HepG2 (cell line): ENCODE measurements at regions of chr6 and their contacts with region 1.

Region 1: GRCh38 chr6:13026557-13026956 is 301.8 kb downstream of the TBC1D7 start:
- DNase-seq: no peak
- ATAC-seq: no peak
- H3K4me3 ChIP-seq: no peak overlapping the region
- H3K27ac ChIP-seq: no peak overlapping the region
- H3K4me1 ChIP-seq: no peaks in the 10 kb centered on the region
- H3K27me3 ChIP-seq: peaks cover 0 to 9% of the 10 kb centered on the region in 2 experiments; a peak in 3 of 5 replicates
- CTCF ChIP-seq: no peak
- EP300 ChIP-seq: no peak
- POLR2A ChIP-seq: no peak
- RAD21 ChIP-seq: no peak

Region 2: DNA sequence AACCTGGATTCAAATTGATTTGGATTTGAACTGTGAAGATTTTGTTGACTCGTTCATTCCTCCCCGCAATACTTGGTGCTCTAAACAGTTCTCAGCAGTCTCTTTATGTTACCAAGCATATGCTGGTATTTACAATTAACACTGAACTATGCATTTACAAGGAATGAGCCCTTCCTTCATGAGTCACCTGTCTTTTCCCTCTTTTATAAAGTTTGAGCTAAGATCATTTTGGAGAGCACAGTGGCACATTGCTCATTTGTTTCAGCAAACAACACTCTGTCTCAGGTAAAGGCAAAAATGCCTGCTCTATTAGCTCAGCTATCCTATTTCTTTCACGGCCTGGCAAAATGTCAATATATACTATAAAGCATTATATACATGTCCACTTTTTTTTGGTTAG is 24.6 kb before region 1 on chr6:
- CTCF ChIA-PET with region 1: no interaction called
- POLR2A ChIA-PET with region 1: no interaction called
- in situ Hi-C with region 1: no loop called
- intact Hi-C with region 1: no loop called
- DNase-seq: no peak
- ATAC-seq: no peak
- H3K4me3 ChIP-seq: no peak overlapping the region
- H3K27ac ChIP-seq: no peak overlapping the region
- H3K4me1 ChIP-seq: no peaks in the 10 kb centered on the region
- H3K27me3 ChIP-seq: no peaks in the 10 kb centered on the region
- CTCF ChIP-seq: no peak
- EP300 ChIP-seq: no peak
- POLR2A ChIP-seq: no peak
- RAD21 ChIP-seq: no peak

Region 3: GRCh38 chr6:13053006-13053461 is 26.5 kb after region 1 on chr6:
- CTCF ChIA-PET with region 1: no interaction called
- POLR2A ChIA-PET with region 1: no interaction called
- in situ Hi-C with region 1: no loop called
- intact Hi-C with region 1: loop called (anchors 1 kb)
- DNase-seq: no peak
- ATAC-seq: no peak
- H3K4me3 ChIP-seq: no peak overlapping the region
- H3K27ac ChIP-seq: no peak overlapping the region
- H3K4me1 ChIP-seq: no peaks in the 10 kb centered on the region
- H3K27me3 ChIP-seq: no peaks in the 10 kb centered on the region
- CTCF ChIP-seq: no peak
- EP300 ChIP-seq: no peak
- POLR2A ChIP-seq: no peak
- RAD21 ChIP-seq: no peak

Region 4: GRCh38 chr6:13079096-13079723 is 52.7 kb after region 1 on chr6:
- CTCF ChIA-PET with region 1: no interaction called
- POLR2A ChIA-PET with region 1: no interaction called
- in situ Hi-C with region 1: no loop called
- intact Hi-C with region 1: no loop called
- DNase-seq: no peak
- ATAC-seq: no peak
- H3K4me3 ChIP-seq: no peak overlapping the region
- H3K27ac ChIP-seq: no peak overlapping the region
- H3K4me1 ChIP-seq: no peaks in the 10 kb centered on the region
- H3K27me3 ChIP-seq: no peaks in the 10 kb centered on the region
- CTCF ChIP-seq: no peak
- EP300 ChIP-seq: no peak
- POLR2A ChIP-seq: no peak
- RAD21 ChIP-seq: no peak

Region 5: GRCh38 chr6:13328076-13328874 is 301.7 kb after region 1 on chr6 and contains the start of gene TBC1D7:
- CTCF ChIA-PET with region 1: no interaction called
- POLR2A ChIA-PET with region 1: no interaction called
- in situ Hi-C with region 1: no loop called
- intact Hi-C with region 1: no loop called
- DNase-seq: peak; percentile 92
- ATAC-seq: peak; percentile 92
- H3K4me3 ChIP-seq: peak within 1 kb of the TSS; percentile 72 to 92 (median 90)
- H3K27ac ChIP-seq: peak within 1 kb of the TSS; percentile 81
- H3K4me1 ChIP-seq: peaks cover 45% of the 10 kb centered on the region
- H3K27me3 ChIP-seq: peaks cover 0 to 4% of the 10 kb centered on the region in 2 experiments; a peak in 2 of 5 replicates
- CTCF ChIP-seq: peak; percentile 28
- EP300 ChIP-seq: no peak
- POLR2A ChIP-seq: peak; percentile 74 to 94
- RAD21 ChIP-seq: peak; percentile 22; the same call in 1 of the 2 replicates
- total RNA-seq, gene TBC1D7: 23.3 and 28.5 TPM in 2 replicates